ENCODE measurements at regions of chr5 and their contacts with region 1.

Region 1: DNA sequence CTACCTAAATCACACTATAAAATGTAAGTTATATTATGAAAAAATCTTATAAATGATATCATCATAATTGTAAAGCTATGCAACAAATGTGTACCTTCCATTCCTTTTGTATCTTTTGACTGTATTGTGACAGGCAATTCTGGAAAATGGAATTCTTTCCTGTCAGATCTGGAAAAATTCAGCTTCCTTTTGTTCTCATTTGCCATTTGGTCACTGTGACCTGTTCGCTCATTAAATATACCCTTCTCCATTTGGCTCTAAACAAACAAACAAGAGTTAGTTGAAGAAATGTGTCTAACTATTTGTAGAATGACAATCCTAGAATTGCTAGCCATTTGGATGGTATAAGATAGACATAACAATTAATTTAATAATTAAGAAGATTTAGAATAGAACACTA is 62.7 kb downstream of the CDKL3 start:
- DNase-seq: no peak
- H3K27ac ChIP-seq: no peak overlapping the region
- CTCF ChIP-seq: no peak

Region 2: DNA sequence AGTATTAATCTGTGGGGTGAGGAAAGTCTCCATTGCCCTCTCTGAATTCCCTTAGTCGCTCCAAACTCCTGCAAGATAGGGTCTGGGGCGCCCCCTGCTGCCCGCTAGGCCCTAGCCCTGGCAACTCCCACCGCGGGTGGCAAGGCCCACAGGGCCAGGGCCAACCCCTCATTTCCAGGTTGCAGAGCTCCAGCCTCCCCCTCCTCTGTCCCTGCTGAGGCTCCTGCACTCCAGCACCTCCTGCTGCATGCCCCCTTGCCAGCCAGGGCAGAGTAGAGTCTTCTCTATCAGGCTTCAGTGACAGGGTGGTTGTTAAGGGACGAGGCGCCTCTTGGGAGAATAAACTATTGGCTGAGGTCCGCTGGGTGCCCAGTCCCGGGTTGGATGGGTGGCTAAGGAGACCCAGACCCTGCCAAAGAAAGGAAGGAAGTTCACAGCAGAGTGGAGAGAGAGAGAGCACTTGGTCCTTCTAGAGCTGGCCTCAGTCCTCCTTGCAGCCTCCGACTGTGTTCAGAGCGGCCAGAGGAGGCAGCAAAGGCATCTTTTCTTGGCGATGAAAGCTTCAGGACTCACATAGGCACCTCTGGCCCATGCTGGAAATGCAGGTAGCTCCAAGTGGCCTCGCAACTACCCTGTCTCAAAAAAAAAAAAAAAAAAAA is 282.7 kb after region 1 on chr5:
- CTCF ChIA-PET with region 1: interaction called, 11 read pairs
- POLR2A ChIA-PET with region 1: no interaction called
- DNase-seq: peak; percentile 74
- H3K27ac ChIP-seq: no peak overlapping the region
- CTCF ChIP-seq: peak; percentile 86

Region 3: DNA sequence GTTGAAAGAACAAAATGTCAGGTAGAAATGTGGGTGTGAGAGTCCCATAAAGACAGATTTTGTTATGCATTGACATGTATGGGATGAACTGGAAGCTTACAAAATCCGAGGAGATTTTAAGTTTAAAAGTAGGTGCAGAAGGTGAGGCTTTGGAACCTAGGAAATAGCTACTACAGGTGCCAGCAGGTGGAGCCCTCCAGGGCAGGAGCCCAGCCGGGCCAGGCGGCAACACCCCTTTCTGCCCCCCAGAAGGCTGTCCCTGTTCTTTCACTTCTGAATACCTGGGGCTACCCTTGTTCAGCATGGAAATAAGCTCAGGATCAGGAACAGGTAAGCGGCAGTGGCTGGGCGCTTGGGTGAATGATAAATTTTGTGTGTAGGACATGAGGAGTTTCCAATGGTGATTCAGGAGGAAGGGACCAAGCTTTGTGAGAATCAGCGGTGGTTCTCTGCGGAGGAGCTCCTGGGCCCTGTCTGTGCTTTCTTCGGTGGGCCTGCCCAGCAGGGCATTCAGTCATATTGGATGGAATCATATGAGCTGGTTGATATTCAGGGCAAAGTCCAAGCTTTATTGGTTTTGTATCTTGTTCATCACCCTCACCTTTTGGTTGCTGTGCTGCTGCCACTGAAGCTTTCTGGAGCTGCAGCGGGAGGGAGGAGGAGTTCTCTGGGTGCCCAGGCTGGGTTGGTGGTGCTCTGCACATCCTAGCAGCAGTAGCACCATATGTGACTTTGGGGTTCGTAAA is 612.9 kb after region 1 on chr5:
- CTCF ChIA-PET with region 1: no interaction called
- POLR2A ChIA-PET with region 1: no interaction called
- DNase-seq: peak; percentile 31
- H3K27ac ChIP-seq: no peak overlapping the region
- CTCF ChIP-seq: peak; percentile 64